ENCODE measurements at regions of chr3 and their contacts with region 1.

Region 1: GRCh38 chr3:151468284-151468917 is 7.5 kb upstream of the IGSF10 start:
- DNase-seq: peak; percentile 54 to 78
- H3K4me3 ChIP-seq: no peak overlapping the region
- H3K4me3 Mint-ChIP-seq: no peak overlapping the region
- H3K27ac Mint-ChIP-seq: no peak overlapping the region
- H3K4me1 ChIP-seq: no peaks in the 10 kb centered on the region
- H3K4me1 Mint-ChIP-seq: no peaks in the 10 kb centered on the region
- H3K27me3 ChIP-seq: no peaks in the 10 kb centered on the region
- H3K27me3 Mint-ChIP-seq: no peaks in the 10 kb centered on the region
- CTCF ChIP-seq: peak; percentile 77 to 90

Region 2: GRCh38 chr3:151501923-151502632 is 33.7 kb after region 1 on chr3:
- CTCF ChIA-PET with region 1: no interaction called
- POLR2A ChIA-PET with region 1: no interaction called
- intact Hi-C with region 1: no loop called
- DNase-seq: no peak
- H3K4me3 ChIP-seq: no peak overlapping the region
- H3K4me3 Mint-ChIP-seq: no peak overlapping the region
- H3K27ac Mint-ChIP-seq: no peak overlapping the region
- H3K4me1 ChIP-seq: no peaks in the 10 kb centered on the region
- H3K4me1 Mint-ChIP-seq: no peaks in the 10 kb centered on the region
- H3K27me3 ChIP-seq: no peaks in the 10 kb centered on the region
- H3K27me3 Mint-ChIP-seq: no peaks in the 10 kb centered on the region
- CTCF ChIP-seq: no peak

Region 3: GRCh38 chr3:151638555-151639417 is 170.4 kb after region 1 on chr3:
- CTCF ChIA-PET with region 1: no interaction called
- POLR2A ChIA-PET with region 1: no interaction called
- intact Hi-C with region 1: loop called (anchors 5 kb)
- DNase-seq: peak; percentile 72 to 76
- H3K4me3 ChIP-seq: no peak overlapping the region
- H3K4me3 Mint-ChIP-seq: peak overlapping the region; percentile 14
- H3K27ac Mint-ChIP-seq: peak overlapping the region; percentile 59
- H3K4me1 ChIP-seq: peaks cover 31% of the 10 kb centered on the region
- H3K4me1 Mint-ChIP-seq: peaks cover 21% of the 10 kb centered on the region
- H3K27me3 ChIP-seq: no peaks in the 10 kb centered on the region
- H3K27me3 Mint-ChIP-seq: no peaks in the 10 kb centered on the region
- CTCF ChIP-seq: no peak

Region 4: DNA sequence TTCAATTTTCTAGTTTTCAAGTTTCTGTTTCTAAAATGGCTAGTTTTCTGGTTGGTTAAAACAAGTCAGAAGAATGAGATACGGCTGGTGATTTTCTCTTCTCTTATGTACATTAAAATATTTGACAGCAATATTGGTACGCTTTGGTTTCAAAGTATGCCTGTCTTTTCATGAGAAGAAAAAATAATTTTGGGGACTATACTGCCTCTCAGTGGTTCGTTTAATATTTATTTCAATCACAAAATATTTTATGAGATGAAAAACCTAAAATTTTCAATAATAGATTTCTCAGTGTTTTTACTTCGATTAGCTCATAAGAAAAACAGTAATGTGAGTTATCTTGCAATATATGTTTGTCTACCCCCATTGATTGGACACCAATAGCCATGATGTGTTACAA is 192.5 kb after region 1 on chr3:
- CTCF ChIA-PET with region 1: no interaction called
- POLR2A ChIA-PET with region 1: no interaction called
- intact Hi-C with region 1: loop called (anchors 1 kb)
- DNase-seq: no peak
- H3K4me3 ChIP-seq: no peak overlapping the region
- H3K4me3 Mint-ChIP-seq: no peak overlapping the region
- H3K27ac Mint-ChIP-seq: no peak overlapping the region
- H3K4me1 ChIP-seq: peaks cover 6% of the 10 kb centered on the region; the same call in 1 of the 2 replicates
- H3K4me1 Mint-ChIP-seq: peaks cover 6% of the 10 kb centered on the region
- H3K27me3 ChIP-seq: no peaks in the 10 kb centered on the region
- H3K27me3 Mint-ChIP-seq: no peaks in the 10 kb centered on the region
- CTCF ChIP-seq: peak in 1 of 2 experiments; percentile 16

Measured in Caco-2 (cell line).